Astrocyte of the cerebellum (primary cell): ENCODE measurements at regions of chr12 and their contacts with region 1.

Region 1: DNA sequence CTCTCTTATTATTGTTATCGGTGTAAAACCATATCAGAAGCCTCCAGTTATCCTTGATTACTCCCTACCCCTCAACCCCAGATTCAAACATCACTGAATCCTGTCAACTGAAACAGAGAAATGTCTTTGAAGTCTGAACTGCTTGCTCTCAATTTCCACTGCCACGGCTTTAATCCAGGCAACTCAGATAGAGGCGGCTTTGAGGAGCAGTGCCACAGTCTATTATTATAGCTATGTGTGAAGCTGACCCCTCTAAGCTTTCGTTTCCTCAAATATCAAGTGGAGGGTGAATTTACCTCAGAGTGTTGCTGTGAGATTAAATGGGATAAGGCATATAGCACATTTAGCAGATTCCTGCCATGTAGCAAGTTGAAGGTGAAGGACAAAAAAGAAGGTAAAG is 49.0 kb upstream of the PDE3A start:
- DNase-seq: no peak
- H3K4me3 ChIP-seq: no peak overlapping the region
- CTCF ChIP-seq: no peak

Region 2: GRCh38 chr12:20272801-20273200 is 46.6 kb before region 1 on chr12:
- in situ Hi-C with region 1: no loop called
- DNase-seq: no peak
- H3K4me3 ChIP-seq: no peak overlapping the region
- CTCF ChIP-seq: no peak

Region 3: GRCh38 chr12:20350495-20350894 is 31.1 kb after region 1 on chr12:
- in situ Hi-C with region 1: loop called (anchors 5 kb)
- DNase-seq: peak; percentile 56
- H3K4me3 ChIP-seq: no peak overlapping the region
- CTCF ChIP-seq: no peak

Region 4: GRCh38 chr12:20367731-20368650 is 48.6 kb after region 1 on chr12 and contains the start of gene PDE3A:
- in situ Hi-C with region 1: no loop called
- DNase-seq: peak; percentile 62
- H3K4me3 ChIP-seq: peak within 1 kb of the TSS; percentile 59
- CTCF ChIP-seq: peak; percentile 46